ENCODE measurements at regions of chr22 and their contacts with region 1.

Region 1: DNA sequence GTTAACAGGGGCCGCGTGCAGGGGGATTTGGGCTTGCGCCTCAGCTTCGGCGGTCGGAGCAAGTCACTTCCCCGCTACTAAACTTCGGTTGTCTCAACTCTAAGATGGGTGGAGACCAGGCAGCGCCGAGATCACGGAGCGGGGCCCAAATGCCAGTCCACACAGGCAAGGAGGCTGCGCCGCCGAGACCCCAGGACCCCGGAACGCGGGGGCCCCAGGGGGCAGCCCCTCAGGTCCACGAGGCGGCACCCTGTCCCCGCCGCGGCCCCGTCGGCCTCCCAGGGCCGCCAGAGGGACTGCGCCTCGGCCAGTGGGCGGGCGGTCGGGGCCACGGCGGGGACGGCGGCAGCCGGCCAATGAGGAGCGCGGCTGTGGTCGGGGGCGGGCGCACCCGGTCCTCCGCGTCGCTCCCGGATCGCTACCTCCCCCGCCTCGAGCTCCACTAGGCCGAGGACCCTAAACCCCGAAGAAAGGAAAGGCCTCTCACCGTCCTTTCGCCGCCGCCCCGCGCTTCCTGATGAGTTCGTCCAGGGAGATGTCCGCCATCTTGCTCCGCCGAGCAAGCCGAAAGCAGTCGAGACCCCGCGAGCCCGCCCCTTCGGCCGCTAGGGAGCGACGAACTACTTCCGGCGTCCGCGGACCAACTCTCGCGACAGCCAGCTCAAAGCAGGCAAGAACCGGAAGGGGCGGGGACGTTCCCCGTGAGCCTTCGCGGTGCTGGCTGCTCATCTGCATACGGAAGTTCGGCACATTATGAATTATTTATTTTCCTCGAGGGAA is at the start of gene POLDIP3:
- DNase-seq: peak; percentile 96 to 99 (median 98)
- ATAC-seq: peak; percentile 84
- H3K4me3 ChIP-seq: peak within 1 kb of the TSS; percentile 91
- H3K4me3 Mint-ChIP-seq: peak within 1 kb of the TSS; percentile 92 to 99 (median 97)
- H3K27ac ChIP-seq: peak within 1 kb of the TSS; percentile 91
- H3K27ac Mint-ChIP-seq: peak within 1 kb of the TSS; percentile 98 to 100 (median 100)
- H3K4me1 ChIP-seq: peaks cover 34 to 40% of the 10 kb centered on the region in 2 donors
- H3K4me1 Mint-ChIP-seq: peaks cover 46 to 65% (median 54%) of the 10 kb centered on the region in 7 donors
- H3K27me3 ChIP-seq: no peaks in the 10 kb centered on the region
- H3K27me3 Mint-ChIP-seq: peaks cover 0 to 5% (median 0%) of the 10 kb centered on the region in 5 donors
- total RNA-seq, gene POLDIP3: 62.5 to 86.7 (median 75.2) TPM

Region 2: DNA sequence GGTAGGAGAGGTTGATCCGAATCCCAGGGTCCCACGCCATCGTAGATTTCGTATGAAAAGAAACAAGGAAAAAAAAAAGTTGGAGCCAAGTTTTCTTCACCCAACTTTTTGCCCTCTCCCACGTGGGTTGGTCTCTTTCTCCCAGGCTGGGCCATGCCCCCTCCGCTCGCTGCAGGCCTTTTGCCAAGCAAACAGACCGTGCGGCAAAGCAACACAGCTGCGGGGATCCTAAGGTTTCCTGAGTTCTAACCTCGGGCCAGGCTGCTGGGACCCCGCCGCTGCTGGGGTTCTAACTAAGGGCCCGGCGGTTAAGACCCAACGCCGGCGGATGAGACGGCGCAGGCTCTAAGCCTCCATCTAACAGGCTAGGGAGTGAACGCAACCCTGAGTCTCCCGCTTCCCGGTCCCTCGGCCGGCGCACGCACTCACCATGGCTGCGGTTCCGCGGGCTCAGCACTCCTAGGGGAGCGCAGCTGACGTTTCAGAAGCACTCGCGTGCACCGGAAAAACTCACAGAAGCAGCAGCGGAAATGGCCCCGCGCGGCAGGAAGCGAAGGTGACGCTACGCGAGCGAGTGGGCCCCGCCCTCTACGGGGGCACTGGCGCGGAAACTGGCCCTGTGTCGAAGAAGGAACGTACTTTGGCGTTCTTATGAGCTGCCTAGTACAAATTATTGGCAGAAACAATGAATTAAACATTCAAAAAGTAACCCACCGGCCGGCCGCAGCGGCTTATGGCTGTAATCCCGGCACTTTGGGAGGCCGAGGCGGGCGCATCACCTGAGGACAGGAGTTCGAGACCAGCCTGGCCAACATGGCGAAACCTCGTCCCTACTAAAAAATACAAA is 925.9 kb before region 1 on chr22 and contains the start of gene SNU13:
- CTCF ChIA-PET with region 1: no interaction called
- POLR2A ChIA-PET with region 1: no interaction called
- intact Hi-C with region 1: loop called in 1 of 2 experiments (anchors 10 kb)
- DNase-seq: peak; percentile 79 to 94 (median 92)
- ATAC-seq: peak; percentile 97
- H3K4me3 ChIP-seq: peak within 1 kb of the TSS; percentile 98
- H3K4me3 Mint-ChIP-seq: peak within 1 kb of the TSS; percentile 90 to 100 (median 96)
- H3K27ac ChIP-seq: peak within 1 kb of the TSS; percentile 95
- H3K27ac Mint-ChIP-seq: peak within 1 kb of the TSS; percentile 94 to 100 (median 99)
- H3K4me1 ChIP-seq: peaks cover 12 to 13% of the 10 kb centered on the region in 2 donors
- H3K4me1 Mint-ChIP-seq: peaks cover 18 to 51% (median 37%) of the 10 kb centered on the region in 7 donors
- H3K27me3 ChIP-seq: no peaks in the 10 kb centered on the region
- H3K27me3 Mint-ChIP-seq: no peaks in the 10 kb centered on the region
- total RNA-seq, gene SNU13: 117 to 180 (median 122) TPM

Region 3: GRCh38 chr22:42070517-42071422 is 543.7 kb before region 1 on chr22 and contains the start of gene NAGA:
- CTCF ChIA-PET with region 1: no interaction called
- POLR2A ChIA-PET with region 1: no interaction called
- intact Hi-C with region 1: no loop called
- DNase-seq: peak; percentile 79 to 91 (median 88)
- ATAC-seq: peak; percentile 99
- H3K4me3 ChIP-seq: peak within 1 kb of the TSS; percentile 75
- H3K4me3 Mint-ChIP-seq: peak within 1 kb of the TSS; percentile 86 to 96 (median 94)
- H3K27ac ChIP-seq: peak within 1 kb of the TSS; percentile 75
- H3K27ac Mint-ChIP-seq: peak within 1 kb of the TSS; percentile 81 to 94 (median 92)
- H3K4me1 ChIP-seq: peaks cover 16 to 22% of the 10 kb centered on the region in 2 donors
- H3K4me1 Mint-ChIP-seq: peaks cover 22 to 54% (median 45%) of the 10 kb centered on the region in 7 donors
- H3K27me3 ChIP-seq: no peaks in the 10 kb centered on the region
- H3K27me3 Mint-ChIP-seq: no peaks in the 10 kb centered on the region
- total RNA-seq, gene NAGA: 7.6 to 38.8 (median 9.4) TPM

Region 4: DNA sequence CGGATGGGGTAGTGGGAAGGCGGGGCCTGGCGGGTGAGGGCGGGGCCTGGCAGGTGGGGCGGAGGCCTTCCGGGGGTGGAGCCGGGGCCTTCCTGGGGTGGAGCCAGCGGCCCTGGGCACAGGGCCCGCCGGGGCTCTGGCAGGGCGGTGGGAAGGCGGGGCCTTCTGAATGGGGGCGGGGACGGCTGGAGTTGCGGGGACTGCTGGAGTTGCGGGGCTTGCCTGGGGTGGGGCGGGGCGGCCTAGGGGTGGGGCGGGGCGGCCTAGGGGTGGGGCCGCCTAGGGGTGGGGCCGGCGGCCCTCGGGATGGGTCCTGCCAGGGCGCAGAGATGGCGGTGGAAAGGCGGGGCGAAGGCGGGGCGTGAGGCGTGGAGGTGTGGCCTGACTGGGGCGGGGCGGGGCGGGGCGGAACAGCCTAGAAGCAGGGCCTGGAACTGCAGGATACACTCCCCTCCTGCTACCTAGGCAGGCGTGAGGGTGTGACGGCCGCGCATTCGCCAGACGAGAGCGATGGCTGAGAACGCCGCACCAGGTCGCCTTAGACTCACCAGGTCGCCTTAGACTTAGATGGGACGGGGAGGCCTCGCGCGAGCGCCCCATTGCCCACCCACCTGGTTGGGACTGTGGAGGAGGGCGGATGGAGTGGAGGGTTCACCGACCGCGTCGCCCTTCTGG is 114.2 kb before region 1 on chr22:
- CTCF ChIA-PET with region 1: no interaction called
- POLR2A ChIA-PET with region 1: no interaction called
- intact Hi-C with region 1: loop called in 1 of 2 experiments (anchors 2 kb)
- DNase-seq: peak; percentile 69 to 86 (median 82)
- ATAC-seq: peak; percentile 96
- H3K4me3 ChIP-seq: peak overlapping the region; percentile 53
- H3K4me3 Mint-ChIP-seq: peak overlapping the region; percentile 60 to 78 (median 74)
- H3K27ac ChIP-seq: peak overlapping the region; percentile 50
- H3K27ac Mint-ChIP-seq: peak overlapping the region in 3 of 9 donors; percentile 33 to 84 (median 38)
- H3K4me1 ChIP-seq: peaks cover 4 to 5% of the 10 kb centered on the region in 2 donors
- H3K4me1 Mint-ChIP-seq: peaks cover 5 to 17% (median 12%) of the 10 kb centered on the region in 7 donors
- H3K27me3 ChIP-seq: no peaks in the 10 kb centered on the region
- H3K27me3 Mint-ChIP-seq: peaks cover 0 to 2% (median 0%) of the 10 kb centered on the region in 5 donors

Region 5: GRCh38 chr22:42533638-42533977 is 80.9 kb before region 1 on chr22:
- CTCF ChIA-PET with region 1: no interaction called
- POLR2A ChIA-PET with region 1: no interaction called
- intact Hi-C with region 1: loop called (anchors 2 to 5 kb)
- DNase-seq: no peak
- ATAC-seq: no peak
- H3K4me3 ChIP-seq: peak overlapping the region; percentile 60
- H3K4me3 Mint-ChIP-seq: peak overlapping the region; percentile 72 to 92 (median 83)
- H3K27ac ChIP-seq: peak overlapping the region; percentile 39
- H3K27ac Mint-ChIP-seq: peak overlapping the region in 8 of 9 donors; percentile 55 to 95 (median 77)
- H3K4me1 ChIP-seq: peaks cover 0 to 5% of the 10 kb centered on the region in 2 donors
- H3K4me1 Mint-ChIP-seq: peaks cover 7 to 26% (median 9%) of the 10 kb centered on the region in 7 donors
- H3K27me3 ChIP-seq: no peaks in the 10 kb centered on the region
- H3K27me3 Mint-ChIP-seq: peaks cover 0 to 4% (median 0%) of the 10 kb centered on the region in 5 donors

Region 6: DNA sequence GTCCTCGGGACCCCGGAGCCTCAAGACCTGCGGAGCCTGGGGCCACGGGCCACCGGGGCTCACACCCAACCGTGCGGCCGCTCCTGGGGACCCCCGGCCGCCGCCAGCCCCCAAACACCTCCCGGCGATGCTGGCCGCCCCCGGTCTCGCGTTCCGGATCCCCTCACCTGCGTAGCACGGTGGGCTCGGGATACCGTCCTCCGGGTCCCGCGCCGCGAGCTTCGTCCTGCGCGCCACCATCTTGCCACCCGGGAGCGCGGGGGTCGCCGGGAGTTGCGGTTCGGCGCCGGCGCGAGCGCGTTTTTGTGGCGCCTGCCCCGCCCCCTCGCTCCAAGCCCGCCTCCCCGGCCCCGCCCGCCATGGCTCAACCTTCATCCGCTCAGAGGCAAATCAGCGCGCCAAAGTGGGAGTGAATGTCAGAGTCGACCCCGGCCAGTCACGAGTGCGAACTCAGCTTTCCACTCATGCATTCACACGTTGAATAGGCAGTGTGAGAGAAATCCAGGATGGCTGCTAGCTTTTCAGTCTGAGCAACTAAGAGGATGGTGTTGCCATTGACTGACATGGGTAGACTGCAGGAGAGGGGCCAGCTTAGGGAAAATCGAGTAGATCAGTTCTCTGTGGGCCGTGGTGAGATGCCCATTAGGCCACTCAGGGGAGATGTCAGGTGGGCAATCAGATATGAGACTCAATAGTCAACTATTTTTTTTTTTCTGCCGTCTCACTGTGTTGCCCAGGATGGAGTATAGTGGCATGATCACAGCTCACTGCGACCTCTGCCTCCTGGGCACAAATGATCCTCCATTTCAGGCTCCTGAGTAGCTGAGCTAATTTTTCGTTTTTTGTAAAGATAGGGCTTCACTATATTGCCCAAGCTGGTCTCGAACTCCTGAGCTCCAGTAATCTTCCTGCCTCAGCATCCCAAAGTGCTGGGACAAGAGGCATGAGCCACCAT is 32.5 kb before region 1 on chr22:
- CTCF ChIA-PET with region 1: no interaction called
- POLR2A ChIA-PET with region 1: interaction called, 8 read pairs
- intact Hi-C with region 1: loop called (anchors 1 kb)
- DNase-seq: peak; percentile 69 to 88 (median 80)
- ATAC-seq: peak; percentile 95
- H3K4me3 ChIP-seq: peak overlapping the region; percentile 75
- H3K4me3 Mint-ChIP-seq: peak overlapping the region; percentile 83 to 99 (median 93)
- H3K27ac ChIP-seq: peak overlapping the region; percentile 78
- H3K27ac Mint-ChIP-seq: peak overlapping the region; percentile 76 to 95 (median 87)
- H3K4me1 ChIP-seq: peaks cover 5 to 10% of the 10 kb centered on the region in 2 donors
- H3K4me1 Mint-ChIP-seq: peaks cover 11 to 16% (median 14%) of the 10 kb centered on the region in 7 donors
- H3K27me3 ChIP-seq: no peaks in the 10 kb centered on the region
- H3K27me3 Mint-ChIP-seq: no peaks in the 10 kb centered on the region

Region 7: DNA sequence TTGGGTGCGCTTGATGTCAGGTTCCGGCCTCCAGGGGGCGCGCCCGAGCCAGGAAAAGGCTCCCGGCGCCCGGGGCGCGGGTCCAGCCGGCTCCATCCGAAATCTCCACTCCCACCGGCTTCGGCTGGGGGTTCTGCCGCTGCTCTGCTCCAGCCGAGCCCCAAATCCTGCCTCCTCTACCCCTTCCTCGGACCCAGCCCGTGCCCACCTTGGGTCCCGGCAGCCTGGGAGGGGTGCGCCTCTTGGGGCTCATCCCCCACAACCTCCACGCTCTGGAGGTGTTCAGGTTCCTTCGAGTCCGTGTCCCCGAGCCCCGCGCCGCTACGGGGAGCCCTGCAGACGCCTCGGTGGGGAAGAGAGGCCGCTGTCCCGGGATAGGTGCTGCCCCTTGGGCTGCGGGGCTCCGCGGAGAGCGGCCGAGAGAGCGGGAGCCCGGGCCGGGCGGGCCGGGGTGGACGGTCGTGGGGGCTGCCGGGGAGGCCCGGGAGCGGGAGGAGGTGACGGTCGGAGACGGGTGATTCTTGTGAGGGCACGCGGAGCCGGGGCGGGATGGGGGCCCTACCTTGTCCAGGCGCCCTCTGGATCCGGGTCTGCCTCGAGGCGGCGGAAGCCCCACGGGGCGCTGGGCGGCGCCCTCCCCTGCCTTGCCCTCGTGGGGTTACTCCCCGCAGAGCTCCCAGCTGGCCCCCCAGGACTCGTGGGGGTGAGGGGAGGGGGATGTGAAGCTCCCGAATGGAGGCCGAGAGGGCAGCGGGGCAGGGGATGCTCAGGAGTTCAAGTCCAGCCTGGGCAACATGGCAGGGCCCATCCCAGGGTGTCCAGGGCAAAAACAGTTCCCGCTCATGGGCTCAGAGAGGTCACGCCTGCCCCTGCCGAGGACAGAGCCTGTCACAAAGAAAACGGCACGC is 47.9 kb after region 1 on chr22:
- CTCF ChIA-PET with region 1: no interaction called
- POLR2A ChIA-PET with region 1: no interaction called
- intact Hi-C with region 1: no loop called
- DNase-seq: peak; percentile 61 to 87 (median 77)
- ATAC-seq: peak; percentile 95
- H3K4me3 ChIP-seq: peak overlapping the region; percentile 66
- H3K4me3 Mint-ChIP-seq: peak overlapping the region; percentile 48 to 77 (median 70)
- H3K27ac ChIP-seq: no peak overlapping the region
- H3K27ac Mint-ChIP-seq: no peak overlapping the region
- H3K4me1 ChIP-seq: no peaks in the 10 kb centered on the region
- H3K4me1 Mint-ChIP-seq: peaks cover 0 to 4% (median 0%) of the 10 kb centered on the region in 7 donors
- H3K27me3 ChIP-seq: no peaks in the 10 kb centered on the region
- H3K27me3 Mint-ChIP-seq: peaks cover 0 to 21% (median 0%) of the 10 kb centered on the region in 5 donors

Region 8: GRCh38 chr22:42856865-42857704 is 242.6 kb after region 1 on chr22 and contains the start of gene ARFGAP3:
- CTCF ChIA-PET with region 1: interaction called, 3 read pairs
- POLR2A ChIA-PET with region 1: interaction called, 5 read pairs
- intact Hi-C with region 1: loop called (anchors 1 to 2 kb)
- DNase-seq: peak; percentile 87 to 99 (median 96)
- ATAC-seq: peak; percentile 97
- H3K4me3 ChIP-seq: peak within 1 kb of the TSS; percentile 77
- H3K4me3 Mint-ChIP-seq: peak within 1 kb of the TSS; percentile 84 to 92 (median 88)
- H3K27ac ChIP-seq: peak within 1 kb of the TSS; percentile 93
- H3K27ac Mint-ChIP-seq: peak within 1 kb of the TSS; percentile 80 to 94 (median 89)
- H3K4me1 ChIP-seq: peaks cover 4 to 6% of the 10 kb centered on the region in 2 donors
- H3K4me1 Mint-ChIP-seq: peaks cover 0 to 22% (median 10%) of the 10 kb centered on the region in 7 donors
- H3K27me3 ChIP-seq: no peaks in the 10 kb centered on the region
- H3K27me3 Mint-ChIP-seq: no peaks in the 10 kb centered on the region
- total RNA-seq, gene ARFGAP3: 22.9 to 38.4 (median 31.0) TPM

Region 9: DNA sequence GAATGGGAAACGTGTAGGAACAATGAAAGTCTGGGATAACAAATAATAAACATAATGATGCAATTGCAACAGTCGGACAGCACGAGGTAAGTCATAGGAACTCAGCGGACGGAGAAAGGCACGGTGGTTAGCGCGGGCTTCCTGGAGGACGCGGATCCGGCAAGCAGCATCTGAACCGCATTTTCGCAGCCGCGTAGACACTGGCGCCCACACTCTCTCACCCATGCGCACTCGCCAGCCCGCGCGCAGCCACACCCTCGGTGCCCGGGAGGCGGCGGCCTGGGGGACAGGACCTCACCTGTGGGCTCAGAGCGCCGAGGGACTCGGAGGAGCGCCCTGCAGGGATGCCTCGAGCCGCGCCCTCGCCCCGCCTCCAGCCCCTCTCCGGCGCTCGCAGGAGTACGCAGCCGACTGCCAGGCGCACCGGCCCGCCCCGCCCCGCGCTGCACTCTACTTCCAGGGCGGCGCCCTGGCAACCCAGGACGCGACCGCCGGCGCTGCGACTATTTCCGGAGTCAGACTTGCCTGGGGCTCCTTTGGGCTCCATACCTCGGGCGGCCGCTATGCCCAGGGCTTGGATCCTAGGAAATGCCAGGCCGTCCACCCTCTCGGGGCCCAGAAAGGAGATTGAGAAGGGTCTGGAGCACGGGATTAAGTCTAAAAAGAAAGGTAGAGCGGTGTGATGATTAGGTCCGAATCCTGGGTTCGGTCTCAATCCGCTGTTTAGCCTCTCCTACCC is 474.6 kb after region 1 on chr22 and contains the start of gene TTLL1:
- CTCF ChIA-PET with region 1: no interaction called
- POLR2A ChIA-PET with region 1: no interaction called
- intact Hi-C with region 1: loop called (anchors 1 kb)
- DNase-seq: peak; percentile 79 to 90 (median 87)
- ATAC-seq: peak; percentile 93
- H3K4me3 ChIP-seq: peak within 1 kb of the TSS; percentile 49
- H3K4me3 Mint-ChIP-seq: peak within 1 kb of the TSS; percentile 77 to 98 (median 92)
- H3K27ac ChIP-seq: peak within 1 kb of the TSS; percentile 60
- H3K27ac Mint-ChIP-seq: peak within 1 kb of the TSS; percentile 49 to 96 (median 82)
- H3K4me1 ChIP-seq: peaks cover 8 to 13% of the 10 kb centered on the region in 2 donors
- H3K4me1 Mint-ChIP-seq: peaks cover 0 to 19% (median 17%) of the 10 kb centered on the region in 7 donors
- H3K27me3 ChIP-seq: no peaks in the 10 kb centered on the region
- H3K27me3 Mint-ChIP-seq: no peaks in the 10 kb centered on the region
- total RNA-seq, gene TTLL1: 4.6 to 7.7 (median 6.9) TPM